ENCODE measurements at regions of chr15 and their contacts with region 1.

Region 1: GRCh38 chr15:31024330-31024729 is 32.9 kb upstream of the MTMR10 start:
- DNase-seq: peak; percentile 86 to 93
- H3K4me3 ChIP-seq: 0 out of 2 replicates have a peak overlapping the region, but pooled peaks have one; percentile 2
- H3K4me3 Mint-ChIP-seq: peak overlapping the region; percentile 32
- H3K27ac Mint-ChIP-seq: peak overlapping the region; percentile 81
- H3K4me1 ChIP-seq: peaks cover 37% of the 10 kb centered on the region
- H3K4me1 Mint-ChIP-seq: peaks cover 47% of the 10 kb centered on the region
- H3K27me3 ChIP-seq: no peaks in the 10 kb centered on the region
- H3K27me3 Mint-ChIP-seq: no peaks in the 10 kb centered on the region
- CTCF ChIP-seq: no peak

Region 2: GRCh38 chr15:30956216-30956803 is 68.0 kb before region 1 on chr15:
- CTCF ChIA-PET with region 1: no interaction called
- POLR2A ChIA-PET with region 1: no interaction called
- intact Hi-C with region 1: loop called (anchors 2 kb)
- DNase-seq: peak; percentile 75 to 78
- H3K4me3 ChIP-seq: no peak overlapping the region
- H3K4me3 Mint-ChIP-seq: peak overlapping the region; percentile 13
- H3K27ac Mint-ChIP-seq: peak overlapping the region; percentile 86
- H3K4me1 ChIP-seq: peaks cover 22% of the 10 kb centered on the region
- H3K4me1 Mint-ChIP-seq: peaks cover 17% of the 10 kb centered on the region
- H3K27me3 ChIP-seq: no peaks in the 10 kb centered on the region
- H3K27me3 Mint-ChIP-seq: no peaks in the 10 kb centered on the region
- CTCF ChIP-seq: no peak

Region 3: GRCh38 chr15:31013538-31014228 is 10.6 kb before region 1 on chr15:
- CTCF ChIA-PET with region 1: no interaction called
- POLR2A ChIA-PET with region 1: interaction called, 16 read pairs
- intact Hi-C with region 1: loop called (anchors 1 kb)
- DNase-seq: no peak
- H3K4me3 ChIP-seq: no peak overlapping the region
- H3K4me3 Mint-ChIP-seq: peak overlapping the region; percentile 17
- H3K27ac Mint-ChIP-seq: peak overlapping the region; percentile 83
- H3K4me1 ChIP-seq: peaks cover 21% of the 10 kb centered on the region
- H3K4me1 Mint-ChIP-seq: peaks cover 25% of the 10 kb centered on the region
- H3K27me3 ChIP-seq: no peaks in the 10 kb centered on the region
- H3K27me3 Mint-ChIP-seq: peaks cover 4% of the 10 kb centered on the region
- CTCF ChIP-seq: no peak

Region 4: DNA sequence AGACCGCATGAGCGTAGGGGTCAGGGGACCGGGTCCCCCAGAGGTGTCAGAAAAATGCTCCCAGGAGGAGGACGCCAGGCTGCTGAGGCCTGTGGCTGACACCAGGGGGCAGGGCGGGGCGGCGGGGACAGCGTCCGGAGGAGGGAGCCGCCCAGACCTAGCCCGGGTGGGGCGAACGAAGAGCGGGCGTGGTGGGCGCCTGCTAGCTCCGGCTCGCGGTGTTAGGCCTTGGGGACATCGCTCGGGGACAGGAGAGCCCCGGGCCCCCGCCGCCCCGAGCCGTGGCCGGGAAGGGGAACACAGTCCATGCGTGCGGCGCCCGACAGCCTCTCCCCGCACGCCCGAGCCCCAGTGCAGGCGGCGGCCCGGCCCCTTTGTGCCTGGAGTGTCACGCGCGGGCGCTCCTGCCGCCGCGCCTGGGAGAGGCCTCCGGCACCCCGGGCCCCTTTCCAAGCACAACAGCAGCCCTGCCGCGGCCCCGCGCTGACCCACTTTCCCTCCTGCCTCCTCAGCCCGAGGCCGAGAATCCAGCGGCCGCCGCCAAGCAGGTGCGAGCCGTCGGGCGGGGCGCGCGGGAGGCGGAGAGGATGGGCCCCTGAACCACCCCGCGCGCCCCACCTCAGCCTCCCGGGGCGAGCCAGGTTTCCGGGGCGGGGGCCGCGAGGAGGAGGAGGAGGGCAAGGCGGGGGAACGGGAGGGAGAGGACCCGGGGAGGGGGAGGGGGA is 191.3 kb after region 1 on chr15:
- CTCF ChIA-PET with region 1: no interaction called
- POLR2A ChIA-PET with region 1: no interaction called
- intact Hi-C with region 1: loop called (anchors 1 kb)
- DNase-seq: peak; percentile 72 to 84
- H3K4me3 ChIP-seq: peak overlapping the region; percentile 57
- H3K4me3 Mint-ChIP-seq: peak overlapping the region; percentile 67
- H3K27ac Mint-ChIP-seq: no peak overlapping the region
- H3K4me1 ChIP-seq: peaks cover 8% of the 10 kb centered on the region; the same call in 1 of the 2 replicates
- H3K4me1 Mint-ChIP-seq: no peaks in the 10 kb centered on the region
- H3K27me3 ChIP-seq: no peaks in the 10 kb centered on the region
- H3K27me3 Mint-ChIP-seq: no peaks in the 10 kb centered on the region
- CTCF ChIP-seq: peak; percentile 93 to 94